Dendritic cell treated with granulocyte-macrophage colony-stimulating factor and Interleukin-4, amounts not matched to agents 40 ng/mL and 50 ng/mL, for 4 days (primary cell): ENCODE measurements at regions of chr5 and their contacts with region 1.

Region 1: DNA sequence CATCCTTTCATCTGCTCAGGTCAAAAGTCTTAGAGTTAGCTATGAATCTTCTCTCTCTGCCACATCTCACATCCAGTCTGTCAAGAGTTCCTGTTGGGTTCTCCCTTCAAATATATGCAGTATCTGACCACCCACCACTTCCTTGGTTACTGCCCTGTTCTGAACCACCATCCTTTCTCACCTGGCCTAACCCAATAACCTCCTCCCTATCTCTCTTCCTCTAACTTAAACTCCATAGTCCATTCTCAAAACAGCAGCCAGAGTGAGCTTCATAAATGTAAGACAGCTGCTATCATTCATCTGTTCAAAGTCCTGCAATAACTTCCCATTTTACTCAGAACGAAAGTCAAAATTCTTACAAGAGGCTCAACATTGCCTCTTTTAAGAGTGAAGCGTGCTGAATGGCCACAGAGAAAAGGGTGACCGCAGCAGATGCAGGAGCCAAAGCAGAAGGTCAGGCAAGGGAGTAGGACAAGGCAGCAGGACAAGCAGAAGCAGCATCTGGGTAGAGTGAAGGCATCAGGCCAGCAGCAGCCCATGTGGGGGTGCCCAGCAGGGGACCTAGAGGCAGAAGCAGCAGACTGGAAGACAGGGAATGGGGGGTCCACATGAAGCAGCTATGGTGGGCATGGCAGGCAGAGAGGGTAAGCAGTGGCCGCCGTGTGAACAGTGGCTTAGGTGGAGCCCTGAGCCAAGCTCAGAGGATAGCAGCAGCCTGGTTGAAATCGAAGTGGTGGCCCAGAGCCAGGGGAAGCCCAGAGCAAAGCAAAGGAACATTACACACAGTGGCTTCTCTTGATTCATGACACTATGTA is 39.3 kb upstream of the CDC42SE2 start:
- H3K4me3 Mint-ChIP-seq: no peak overlapping the region
- H3K27ac Mint-ChIP-seq: no peak overlapping the region
- H3K4me1 Mint-ChIP-seq: peaks cover 16% of the 10 kb centered on the region
- H3K27me3 Mint-ChIP-seq: no peaks in the 10 kb centered on the region

Region 2: GRCh38 chr5:131252824-131253171 is 28.2 kb after region 1 on chr5:
- intact Hi-C with region 1: loop called (anchors 1 kb)
- H3K4me3 Mint-ChIP-seq: peak overlapping the region; percentile 73
- H3K27ac Mint-ChIP-seq: peak overlapping the region; percentile 93
- H3K4me1 Mint-ChIP-seq: peaks cover 59% of the 10 kb centered on the region
- H3K27me3 Mint-ChIP-seq: no peaks in the 10 kb centered on the region

Region 3: GRCh38 chr5:132180134-132180745 is 955.6 kb after region 1 on chr5:
- intact Hi-C with region 1: no loop called
- H3K4me3 Mint-ChIP-seq: no peak overlapping the region
- H3K27ac Mint-ChIP-seq: no peak overlapping the region
- H3K4me1 Mint-ChIP-seq: peaks cover 40% of the 10 kb centered on the region
- H3K27me3 Mint-ChIP-seq: peaks cover 3% of the 10 kb centered on the region